Posterior cingulate gyrus (tissue), 11 donors: ENCODE measurements at regions of chr6 and their contacts with region 1.

Region 1: DNA sequence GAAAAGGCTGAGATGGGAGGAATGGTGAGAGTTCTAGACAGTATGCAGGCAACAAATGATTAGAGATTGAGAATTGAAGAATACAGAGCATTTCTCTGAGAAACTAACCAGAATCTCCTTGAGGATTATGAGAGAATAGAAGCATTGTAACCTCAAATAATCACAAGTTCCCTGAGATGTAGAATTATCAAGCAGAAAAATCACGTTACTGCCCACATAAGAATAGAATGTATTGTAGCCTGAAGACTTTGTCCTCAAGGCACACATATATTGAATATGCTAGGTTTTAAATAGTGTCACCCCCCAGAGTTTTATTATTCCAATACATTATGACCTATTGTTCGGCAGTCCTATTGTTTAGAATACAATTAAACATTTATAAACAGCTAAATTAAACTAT is 57.2 kb downstream of the CNKSR3 start:
- DNase-seq: no peak

Region 2: DNA sequence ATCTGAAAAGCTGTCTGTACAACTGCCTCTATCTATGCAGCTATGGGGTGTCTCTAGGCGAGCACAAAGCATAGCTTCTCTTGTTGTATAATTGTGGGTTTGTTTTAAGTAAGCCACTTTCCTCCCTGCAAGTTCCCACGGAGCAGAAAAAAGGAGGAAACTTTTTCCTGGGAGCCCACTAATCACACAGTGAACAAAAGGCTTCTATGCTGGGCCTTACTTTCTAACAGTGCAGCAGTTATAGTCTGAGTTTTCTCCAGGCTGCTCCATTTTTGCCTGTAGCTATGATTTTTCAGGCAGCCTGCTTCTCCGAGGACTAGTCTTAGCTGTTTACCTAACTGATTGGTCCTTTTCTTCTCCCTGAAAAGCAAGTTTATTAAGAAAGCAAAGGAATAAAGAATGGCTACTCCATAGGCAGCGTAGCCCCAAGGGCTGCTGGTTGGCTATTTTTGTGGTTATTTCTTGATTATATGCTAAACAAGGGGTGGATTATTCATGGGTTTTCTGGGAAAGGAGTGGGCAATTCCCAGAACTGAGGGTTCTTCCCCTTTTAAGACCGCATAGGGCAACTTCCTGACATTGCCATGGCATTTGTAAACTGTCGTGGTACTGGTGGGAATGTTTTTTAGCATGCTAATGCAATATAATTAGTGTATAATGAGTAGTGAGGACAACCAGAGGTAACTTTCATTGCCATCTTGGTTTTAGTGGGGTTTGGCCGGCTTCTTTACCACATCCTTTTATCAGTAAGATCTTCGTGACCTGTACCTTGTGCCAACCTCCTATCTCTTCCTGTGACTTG is 330.0 kb before region 1 on chr6:
- intact Hi-C with region 1: no loop called
- DNase-seq: no peak

Region 3: GRCh38 chr6:154352898-154353585 is 100.3 kb before region 1 on chr6:
- intact Hi-C with region 1: no loop called
- DNase-seq: no peak

Region 4: DNA sequence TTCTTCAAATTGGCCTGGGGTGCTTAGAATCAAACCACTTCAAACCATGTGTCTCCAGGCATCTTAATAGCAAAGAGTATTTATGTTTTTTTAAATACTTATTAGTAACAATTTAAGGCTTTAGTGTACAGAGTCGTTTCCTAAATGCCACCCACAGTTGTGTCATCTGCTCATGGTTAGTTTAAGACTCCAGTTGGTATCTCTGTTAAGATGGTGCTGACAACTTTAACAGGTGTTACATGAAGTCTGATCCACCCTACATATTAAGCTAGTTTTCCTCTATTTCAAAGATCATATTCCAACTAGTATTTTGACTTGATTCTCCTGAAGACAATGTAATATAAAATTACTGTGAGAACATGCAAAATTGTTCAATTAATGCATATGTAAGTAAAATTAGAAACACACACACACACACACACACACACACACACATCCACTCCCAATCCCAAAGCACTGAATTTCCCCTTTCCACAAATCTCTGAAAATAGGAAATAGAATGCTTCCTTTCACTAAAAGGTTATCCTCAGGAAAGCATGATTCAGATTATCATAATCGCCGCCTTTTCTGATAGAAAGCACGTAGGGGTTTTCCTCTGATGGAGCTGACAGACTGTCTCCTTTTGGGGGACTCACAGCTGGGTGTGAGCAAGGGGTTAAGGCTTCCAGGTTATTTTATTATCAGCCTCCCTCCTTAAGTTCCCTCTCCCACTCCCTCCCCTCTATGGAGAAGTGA is 46.7 kb after region 1 on chr6:
- intact Hi-C with region 1: loop called (anchors 2 kb)
- DNase-seq: no peak